Activated naive CD4-positive, alpha-beta T cell treated with anti-CD3 and anti-CD28 coated beads for 36 hours (primary cell): ENCODE measurements at regions of chr11 and their contacts with region 1.

Region 1: GRCh38 chr11:62726915-62727763 is at the start of gene HNRNPUL2:
- DNase-seq: peak; percentile 99
- H3K4me3 Mint-ChIP-seq: peak within 1 kb of the TSS; percentile 90
- H3K27ac Mint-ChIP-seq: peak within 1 kb of the TSS; percentile 99
- H3K4me1 Mint-ChIP-seq: peaks cover 46% of the 10 kb centered on the region
- H3K27me3 Mint-ChIP-seq: no peaks in the 10 kb centered on the region
- total RNA-seq, gene HNRNPUL2: 58.6 to 61.5 TPM

Region 2: DNA sequence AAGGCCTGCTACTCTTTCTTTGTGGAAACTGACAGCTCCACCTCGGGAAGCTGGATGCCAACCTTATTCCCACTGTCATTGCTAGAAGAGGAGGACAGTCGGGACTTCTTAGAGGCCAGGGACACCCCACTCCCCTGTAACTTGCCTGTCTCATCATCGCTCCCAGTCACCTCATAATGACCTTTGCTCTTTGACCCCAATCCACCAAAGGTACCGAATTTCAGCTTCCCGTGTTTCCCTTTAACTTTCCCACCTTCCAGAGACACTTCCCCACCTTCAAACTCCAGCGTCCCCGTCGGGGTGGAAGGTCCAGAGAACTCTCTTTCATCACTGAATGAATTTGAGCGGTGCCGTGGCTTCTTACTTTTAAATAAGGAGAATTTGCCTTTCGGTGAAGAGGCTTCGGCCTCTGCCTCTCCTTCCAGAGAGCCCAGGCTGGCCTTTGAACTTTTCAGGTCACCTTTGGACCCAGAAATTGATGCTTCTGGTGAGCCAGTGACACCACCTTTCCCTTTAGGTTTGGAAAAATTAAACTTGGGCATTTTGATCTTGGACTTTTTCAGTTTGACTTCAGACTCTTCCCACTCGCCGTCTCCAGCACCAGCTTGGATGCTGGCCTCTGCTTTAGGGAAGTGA is 210.3 kb before region 1 on chr11:
- CTCF ChIA-PET with region 1: no interaction called
- intact Hi-C with region 1: no loop called
- DNase-seq: no peak
- H3K4me3 Mint-ChIP-seq: no peak overlapping the region
- H3K27ac Mint-ChIP-seq: no peak overlapping the region
- H3K4me1 Mint-ChIP-seq: no peaks in the 10 kb centered on the region
- H3K27me3 Mint-ChIP-seq: no peaks in the 10 kb centered on the region

Region 3: DNA sequence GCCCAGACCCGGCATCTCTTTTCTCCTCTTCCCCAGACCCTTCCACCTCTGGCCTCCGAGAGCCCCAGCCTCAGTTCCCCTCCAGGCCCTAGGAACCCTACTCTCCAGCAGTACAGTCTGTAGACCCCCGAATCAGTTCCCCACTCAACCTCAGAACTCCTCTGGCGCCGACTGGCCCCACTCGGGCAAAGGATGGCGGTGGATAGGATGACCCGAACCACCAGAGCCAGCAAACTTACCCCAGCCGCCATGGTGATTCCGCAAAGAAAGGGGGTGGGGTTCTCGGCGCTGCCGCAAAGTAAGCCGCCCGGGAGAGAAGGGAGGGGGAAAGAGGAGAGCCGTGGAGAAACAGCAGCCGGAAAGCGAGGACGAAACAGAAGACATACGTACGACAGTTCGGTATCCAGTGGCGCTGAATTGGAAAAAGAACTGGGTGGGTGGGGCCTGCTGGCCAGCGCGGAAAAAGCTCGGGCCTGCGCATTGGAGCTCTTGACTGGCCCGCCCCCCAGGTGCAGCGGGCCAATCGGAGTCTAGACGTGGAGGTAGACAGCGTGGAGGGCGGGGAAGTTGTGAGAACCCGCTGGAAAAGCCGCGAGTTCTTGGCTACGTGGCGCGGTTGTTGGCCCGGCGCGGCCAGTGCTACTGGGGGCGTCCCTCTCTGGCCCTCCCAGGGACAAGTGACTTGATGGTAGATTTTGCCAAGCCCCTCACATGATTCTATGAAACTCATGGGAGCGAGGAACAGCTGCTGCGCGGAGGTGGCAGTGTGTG is 153.4 kb before region 1 on chr11 and contains the start of gene EEF1G:
- CTCF ChIA-PET with region 1: no interaction called
- intact Hi-C with region 1: loop called (anchors 1 kb)
- DNase-seq: peak; percentile 99
- H3K4me3 Mint-ChIP-seq: peak within 1 kb of the TSS; percentile 95
- H3K27ac Mint-ChIP-seq: peak within 1 kb of the TSS; percentile 97
- H3K4me1 Mint-ChIP-seq: peaks cover 44% of the 10 kb centered on the region
- H3K27me3 Mint-ChIP-seq: no peaks in the 10 kb centered on the region
- total RNA-seq, gene EEF1G: 2,282 to 2,440 TPM

Region 4: GRCh38 chr11:62652161-62653006 is 74.8 kb before region 1 on chr11:
- CTCF ChIA-PET with region 1: no interaction called
- intact Hi-C with region 1: loop called (anchors 2 kb)
- DNase-seq: peak; percentile 37
- H3K4me3 Mint-ChIP-seq: peak overlapping the region; percentile 90
- H3K27ac Mint-ChIP-seq: peak overlapping the region; percentile 87
- H3K4me1 Mint-ChIP-seq: peaks cover 25% of the 10 kb centered on the region
- H3K27me3 Mint-ChIP-seq: no peaks in the 10 kb centered on the region

Region 5: GRCh38 chr11:62705880-62706849 is 21.0 kb before region 1 on chr11:
- CTCF ChIA-PET with region 1: no interaction called
- intact Hi-C with region 1: loop called (anchors 1 kb)
- DNase-seq: peak; percentile 95
- H3K4me3 Mint-ChIP-seq: peak overlapping the region; percentile 88
- H3K27ac Mint-ChIP-seq: peak overlapping the region; percentile 24
- H3K4me1 Mint-ChIP-seq: peaks cover 40% of the 10 kb centered on the region
- H3K27me3 Mint-ChIP-seq: no peaks in the 10 kb centered on the region

Region 6: GRCh38 chr11:62771144-62772021 is 44.2 kb after region 1 on chr11 and contains the start of gene TAF6L:
- CTCF ChIA-PET with region 1: interaction called, 4 read pairs
- intact Hi-C with region 1: loop called (anchors 1 kb)
- DNase-seq: peak; percentile 95
- H3K4me3 Mint-ChIP-seq: peak within 1 kb of the TSS; percentile 80
- H3K27ac Mint-ChIP-seq: peak within 1 kb of the TSS; percentile 91
- H3K4me1 Mint-ChIP-seq: peaks cover 25% of the 10 kb centered on the region
- H3K27me3 Mint-ChIP-seq: no peaks in the 10 kb centered on the region
- total RNA-seq, gene TAF6L: 8.9 to 10.5 TPM

Region 7: GRCh38 chr11:62831520-62832335 is 104.6 kb after region 1 on chr11 and contains the start of gene STX5:
- CTCF ChIA-PET with region 1: interaction called, 3 read pairs
- intact Hi-C with region 1: loop called (anchors 1 kb)
- DNase-seq: peak; percentile 100
- H3K4me3 Mint-ChIP-seq: peak within 1 kb of the TSS; percentile 99
- H3K27ac Mint-ChIP-seq: peak within 1 kb of the TSS; percentile 100
- H3K4me1 Mint-ChIP-seq: peaks cover 47% of the 10 kb centered on the region
- H3K27me3 Mint-ChIP-seq: no peaks in the 10 kb centered on the region
- total RNA-seq, gene STX5: 22.7 to 23.0 TPM

Region 8: DNA sequence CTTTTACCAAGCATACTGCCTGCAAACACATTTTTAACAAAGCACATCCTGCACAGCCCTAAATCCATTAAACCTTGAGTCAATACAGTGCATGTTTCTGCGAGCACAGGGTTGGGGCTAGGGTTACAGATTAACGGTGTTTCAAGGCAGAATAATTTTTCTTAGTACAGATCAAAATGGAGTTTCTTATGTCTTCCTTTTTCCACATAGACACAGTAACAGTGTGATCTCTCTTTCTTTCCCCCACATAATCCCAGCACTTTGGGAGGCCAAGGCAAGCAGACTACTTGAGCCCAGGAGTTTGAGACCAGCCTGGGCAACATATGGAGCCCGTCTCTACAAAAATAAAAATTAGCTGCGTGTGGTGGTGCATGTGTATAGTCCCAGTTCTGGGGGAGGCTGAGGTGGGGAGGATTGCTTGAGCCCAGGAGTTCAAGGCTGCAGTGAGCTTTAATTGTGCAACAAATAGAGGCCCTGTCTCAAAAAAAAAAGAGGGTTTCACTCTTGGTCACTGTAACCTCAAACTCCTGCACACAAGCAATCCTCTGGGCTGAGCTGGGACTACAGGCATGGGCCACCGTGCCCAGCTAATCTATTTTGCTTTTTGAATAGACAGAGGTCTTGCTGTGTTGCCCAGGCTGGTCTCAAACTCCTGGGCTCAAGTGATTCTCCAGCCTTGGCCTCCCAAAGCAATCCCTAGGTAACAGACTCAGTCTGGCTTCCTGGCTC is 133.9 kb after region 1 on chr11:
- CTCF ChIA-PET with region 1: interaction called, 3 read pairs
- intact Hi-C with region 1: loop called (anchors 1 kb)
- DNase-seq: no peak
- H3K4me3 Mint-ChIP-seq: no peak overlapping the region
- H3K27ac Mint-ChIP-seq: no peak overlapping the region
- H3K4me1 Mint-ChIP-seq: peaks cover 46% of the 10 kb centered on the region
- H3K27me3 Mint-ChIP-seq: no peaks in the 10 kb centered on the region